H1 (cell line): ENCODE measurements at regions of chr7 and their contacts with region 1.

Region 1: GRCh38 chr7:24812310-24812945 is 55.2 kb upstream of the GSDME start:
- DNase-seq: peak in 1 of 2 experiments; percentile 72
- H3K4me3 ChIP-seq: no peak overlapping the region
- H3K27ac ChIP-seq: no peak overlapping the region
- H3K4me1 ChIP-seq: no peaks in the 10 kb centered on the region
- H3K27me3 ChIP-seq: no peaks in the 10 kb centered on the region
- CTCF ChIP-seq: peak; percentile 70 to 81 (median 78)
- EP300 ChIP-seq: 0 out of 3 replicates have a peak, but pooled peaks of 1 of the 2 experiments have one; percentile 59
- POLR2A ChIP-seq: no peak
- RAD21 ChIP-seq: peak; percentile 66 to 77

Region 2: DNA sequence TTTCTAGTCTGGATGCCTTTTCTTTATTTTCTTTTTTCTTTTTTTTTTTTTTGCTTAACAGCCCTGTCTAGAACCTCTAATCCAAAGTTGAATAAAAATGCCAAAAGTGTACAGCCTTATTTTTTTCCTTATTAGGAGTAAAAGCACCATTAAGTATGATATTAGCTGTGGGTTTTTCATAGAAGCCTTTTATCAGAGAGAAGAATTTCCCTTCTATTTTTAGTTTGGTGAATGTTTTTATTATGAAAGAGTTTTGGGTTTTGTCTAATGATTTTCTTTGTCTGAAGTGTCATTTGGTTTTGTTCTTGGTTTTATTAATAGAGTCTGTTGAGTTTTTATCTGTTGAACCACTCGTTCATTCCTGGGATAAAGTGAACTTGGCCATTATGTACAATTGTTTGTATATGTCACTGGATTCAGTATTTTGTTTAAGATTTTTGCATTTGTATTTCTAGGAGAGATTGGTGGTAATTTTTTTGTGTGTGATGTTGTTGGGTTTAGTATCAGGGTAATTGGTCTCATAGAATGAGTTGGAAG is 189.7 kb before region 1 on chr7:
- CTCF ChIA-PET with region 1: no interaction called
- POLR2A ChIA-PET with region 1: no interaction called
- DNase-seq: no peak
- H3K4me3 ChIP-seq: no peak overlapping the region
- H3K27ac ChIP-seq: no peak overlapping the region
- H3K4me1 ChIP-seq: peaks cover 0 to 6% (median 0%) of the 10 kb centered on the region in 4 experiments; a peak in 3 of 7 replicates
- H3K27me3 ChIP-seq: no peaks in the 10 kb centered on the region
- CTCF ChIP-seq: no peak
- EP300 ChIP-seq: no peak
- POLR2A ChIP-seq: no peak
- RAD21 ChIP-seq: no peak

Region 3: DNA sequence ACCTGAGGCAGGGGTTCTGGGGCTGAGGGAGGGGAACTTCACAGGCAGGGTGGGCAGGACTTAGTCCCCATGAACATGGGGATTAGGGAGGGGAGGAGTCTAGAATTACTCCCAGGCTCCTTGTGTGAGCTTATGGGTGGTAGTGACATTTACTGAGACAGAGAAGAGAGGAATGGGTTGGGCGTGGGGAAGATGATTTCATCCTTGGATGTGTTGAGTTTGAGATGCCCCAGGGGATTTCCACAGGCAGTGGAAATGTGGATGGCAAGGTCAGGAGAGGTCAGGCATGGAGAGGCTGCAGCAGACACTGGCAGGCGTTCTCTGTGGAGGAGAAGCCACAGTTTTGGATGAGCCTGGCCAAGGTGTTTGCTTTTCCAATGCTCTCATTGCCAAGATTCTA is 28.7 kb before region 1 on chr7:
- CTCF ChIA-PET with region 1: interaction called, 10 read pairs
- POLR2A ChIA-PET with region 1: no interaction called
- DNase-seq: no peak
- H3K4me3 ChIP-seq: no peak overlapping the region
- H3K27ac ChIP-seq: no peak overlapping the region
- H3K4me1 ChIP-seq: no peaks in the 10 kb centered on the region
- H3K27me3 ChIP-seq: no peaks in the 10 kb centered on the region
- CTCF ChIP-seq: no peak
- EP300 ChIP-seq: no peak
- POLR2A ChIP-seq: no peak
- RAD21 ChIP-seq: no peak

Region 4: GRCh38 chr7:24825931-24826661 is 13.7 kb after region 1 on chr7:
- CTCF ChIA-PET with region 1: interaction called, 26 read pairs
- POLR2A ChIA-PET with region 1: no interaction called
- DNase-seq: no peak
- H3K4me3 ChIP-seq: no peak overlapping the region
- H3K27ac ChIP-seq: no peak overlapping the region
- H3K4me1 ChIP-seq: peaks cover 0 to 5% (median 0%) of the 10 kb centered on the region in 4 experiments; a peak in 1 of 7 replicates
- H3K27me3 ChIP-seq: no peaks in the 10 kb centered on the region
- CTCF ChIP-seq: no peak
- EP300 ChIP-seq: no peak
- POLR2A ChIP-seq: no peak
- RAD21 ChIP-seq: no peak

Region 5: DNA sequence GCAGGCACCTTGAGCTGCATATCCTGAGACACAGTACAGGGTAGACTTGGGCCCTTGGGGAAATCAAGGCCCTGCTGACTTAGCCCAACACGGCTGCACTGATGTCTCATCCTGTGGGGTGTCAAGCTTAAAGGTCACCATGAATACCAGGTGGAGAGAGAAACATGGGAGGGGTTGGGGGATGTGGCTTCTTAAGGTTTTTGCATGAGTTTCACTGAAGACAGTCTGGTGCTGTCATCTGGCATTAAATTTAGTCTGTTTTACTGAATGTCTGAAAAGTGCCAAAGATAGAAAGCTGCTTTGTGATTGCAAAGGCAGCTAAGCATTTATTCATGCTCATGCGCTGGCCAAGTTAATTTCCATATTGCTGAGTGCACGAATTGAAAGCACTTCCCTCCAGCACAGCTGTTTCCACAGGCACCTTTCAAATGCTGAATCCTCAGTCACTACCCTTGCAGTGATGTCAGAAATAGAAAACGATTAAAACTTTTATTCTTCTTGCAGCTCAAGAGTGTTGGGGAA is 65.4 kb after region 1 on chr7:
- CTCF ChIA-PET with region 1: interaction called, 19 read pairs
- POLR2A ChIA-PET with region 1: no interaction called
- DNase-seq: no peak
- H3K4me3 ChIP-seq: peak overlapping the region in 1 of 4 experiments; percentile 25; a peak in 1 of 8 replicates
- H3K27ac ChIP-seq: no peak overlapping the region
- H3K4me1 ChIP-seq: peaks cover 3 to 21% (median 12%) of the 10 kb centered on the region in 4 experiments; a peak in 5 of 7 replicates
- H3K27me3 ChIP-seq: no peaks in the 10 kb centered on the region
- CTCF ChIP-seq: no peak
- EP300 ChIP-seq: no peak
- POLR2A ChIP-seq: no peak
- RAD21 ChIP-seq: no peak

Region 6: GRCh38 chr7:25093268-25093826 is 280.9 kb after region 1 on chr7:
- CTCF ChIA-PET with region 1: interaction called, 84 read pairs
- POLR2A ChIA-PET with region 1: no interaction called
- DNase-seq: peak in 1 of 2 experiments; percentile 92
- H3K4me3 ChIP-seq: no peak overlapping the region
- H3K27ac ChIP-seq: no peak overlapping the region
- H3K4me1 ChIP-seq: no peaks in the 10 kb centered on the region
- H3K27me3 ChIP-seq: no peaks in the 10 kb centered on the region
- CTCF ChIP-seq: peak; percentile 58 to 86 (median 75)
- EP300 ChIP-seq: no peak
- POLR2A ChIP-seq: no peak
- RAD21 ChIP-seq: peak; percentile 80 to 87

Region 7: GRCh38 chr7:25180946-25181345 is 368.5 kb after region 1 on chr7:
- CTCF ChIA-PET with region 1: no interaction called
- POLR2A ChIA-PET with region 1: no interaction called
- DNase-seq: no peak
- H3K4me3 ChIP-seq: no peak overlapping the region
- H3K27ac ChIP-seq: no peak overlapping the region
- H3K4me1 ChIP-seq: peaks cover 0 to 6% (median 5%) of the 10 kb centered on the region in 4 experiments; a peak in 5 of 7 replicates
- H3K27me3 ChIP-seq: peaks cover 0 to 4% (median 3%) of the 10 kb centered on the region in 4 experiments; a peak in 5 of 7 replicates
- CTCF ChIP-seq: peak in 1 of 3 experiments; percentile 17; a peak in 1 of 4 replicates
- EP300 ChIP-seq: no peak
- POLR2A ChIP-seq: no peak
- RAD21 ChIP-seq: no peak